ENCODE measurements at regions of chr13 and their contacts with region 1.

Region 1: DNA sequence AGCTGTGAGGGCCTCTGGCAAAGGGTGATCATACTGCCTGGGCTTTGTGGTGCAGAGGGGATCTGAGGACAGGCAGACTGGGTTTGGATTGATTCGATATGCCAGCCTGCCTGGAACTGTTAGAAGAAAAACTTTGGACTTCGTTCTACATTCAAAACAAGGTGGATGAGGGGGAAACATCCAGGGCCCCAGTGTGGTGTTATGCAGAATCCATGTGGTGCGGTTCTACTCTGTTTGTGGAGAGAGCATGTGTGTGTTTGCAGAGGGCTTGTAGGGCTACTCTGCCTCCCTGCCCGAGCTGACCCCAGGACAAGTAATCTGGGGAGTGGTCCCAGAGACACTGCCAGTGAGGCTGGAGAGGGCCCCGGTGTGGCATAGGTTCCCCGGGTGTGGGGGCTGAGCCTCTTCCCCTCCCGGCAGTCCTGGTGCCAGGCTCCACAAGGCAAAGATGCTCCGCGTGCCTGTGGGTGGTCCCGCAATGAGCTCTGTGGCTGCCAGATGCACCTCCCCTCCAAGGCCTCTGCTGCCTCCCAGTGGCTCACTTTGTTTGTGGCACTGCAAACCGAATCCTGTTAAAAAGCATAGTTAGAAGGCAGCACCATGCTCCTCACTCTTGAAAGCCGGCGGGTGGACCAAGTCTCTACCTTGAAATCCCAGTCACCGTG is 22.3 kb upstream of the TFDP1 start:
- DNase-seq: peak; percentile 70
- H3K4me3 Mint-ChIP-seq: no peak overlapping the region
- H3K27ac Mint-ChIP-seq: no peak overlapping the region
- H3K4me1 Mint-ChIP-seq: peaks cover 4% of the 10 kb centered on the region
- H3K27me3 Mint-ChIP-seq: peaks cover 2% of the 10 kb centered on the region

Region 2: DNA sequence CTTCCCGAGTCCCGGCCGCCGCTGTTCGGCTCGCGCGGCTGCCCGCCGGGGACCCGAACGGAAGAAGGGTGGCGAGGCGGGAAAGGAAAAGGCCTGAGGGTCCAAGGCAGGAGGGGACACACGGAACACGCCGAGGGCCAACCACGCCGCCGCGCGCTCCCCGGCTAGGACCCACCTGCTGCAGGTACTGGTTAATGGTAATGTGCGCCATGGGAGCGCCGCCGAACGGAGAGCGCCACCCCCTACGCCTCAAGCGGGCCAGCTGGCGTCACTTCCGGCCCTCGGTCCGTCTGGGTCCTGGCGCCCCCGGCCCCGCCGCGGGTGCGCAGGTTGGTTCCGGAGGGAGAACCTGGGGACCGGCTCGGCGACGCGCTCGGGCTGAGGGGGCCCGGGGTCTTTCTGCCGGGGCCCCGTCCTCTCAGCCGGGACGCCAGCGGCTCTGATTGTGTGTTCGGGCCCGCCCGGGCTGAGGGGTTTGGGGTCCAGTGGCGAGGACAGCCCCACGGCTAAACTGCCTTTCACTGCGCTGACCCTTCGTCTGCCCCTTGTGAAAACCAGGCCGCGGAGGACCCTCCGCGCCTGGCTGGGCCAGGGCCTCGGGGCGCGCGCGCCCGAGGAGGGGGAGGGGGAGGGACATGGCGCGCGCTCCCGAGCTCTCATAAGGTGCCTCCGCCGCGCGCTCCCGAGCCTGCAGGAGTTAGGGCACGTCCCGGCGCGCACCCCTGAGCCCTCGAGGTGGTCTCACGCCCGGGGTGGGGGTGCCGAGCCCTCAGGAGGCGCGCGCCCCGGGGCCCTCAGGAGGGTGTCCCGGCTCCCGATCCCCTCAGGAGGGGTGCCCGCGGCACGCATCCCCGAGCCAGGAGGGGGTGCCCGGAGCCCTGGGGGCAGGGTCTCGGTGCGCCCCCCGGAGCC is 353.5 kb before region 1 on chr13 and contains the start of gene PCID2:
- CTCF ChIA-PET with region 1: no interaction called
- intact Hi-C with region 1: no loop called
- DNase-seq: peak; percentile 89
- H3K4me3 Mint-ChIP-seq: peak within 1 kb of the TSS; percentile 77
- H3K27ac Mint-ChIP-seq: peak within 1 kb of the TSS; percentile 81
- H3K4me1 Mint-ChIP-seq: peaks cover 55% of the 10 kb centered on the region
- H3K27me3 Mint-ChIP-seq: no peaks in the 10 kb centered on the region
- total RNA-seq, gene PCID2: 63.5 to 67.1 TPM

Region 3: GRCh38 chr13:113458253-113459065 is 103.8 kb before region 1 on chr13:
- CTCF ChIA-PET with region 1: interaction called, 9 read pairs
- intact Hi-C with region 1: loop called (anchors 1 kb)
- DNase-seq: no peak
- H3K4me3 Mint-ChIP-seq: no peak overlapping the region
- H3K27ac Mint-ChIP-seq: no peak overlapping the region
- H3K4me1 Mint-ChIP-seq: no peaks in the 10 kb centered on the region
- H3K27me3 Mint-ChIP-seq: no peaks in the 10 kb centered on the region

Region 4: GRCh38 chr13:113639616-113640262 is 77.5 kb after region 1 on chr13:
- CTCF ChIA-PET with region 1: no interaction called
- intact Hi-C with region 1: no loop called
- DNase-seq: no peak
- H3K4me3 Mint-ChIP-seq: no peak overlapping the region
- H3K27ac Mint-ChIP-seq: no peak overlapping the region
- H3K4me1 Mint-ChIP-seq: peaks cover 6% of the 10 kb centered on the region
- H3K27me3 Mint-ChIP-seq: no peaks in the 10 kb centered on the region

Measured in activated naive CD4-positive, alpha-beta T cell treated with anti-CD3 and anti-CD28 coated beads for 36 hours (primary cell).